CD4-positive, alpha-beta memory T cell (primary cell): ENCODE measurements at regions of chr1 and their contacts with region 1.

Region 1: GRCh38 chr1:111214074-111214801 is 13.3 kb upstream of the CHI3L2 start:
- DNase-seq: no peak
- H3K4me3 ChIP-seq: peak overlapping the region in 1 of 2 donors; percentile 25
- H3K4me3 Mint-ChIP-seq: peak overlapping the region; percentile 64 to 87 (median 76)
- H3K27ac ChIP-seq: peak overlapping the region; percentile 48
- H3K27ac Mint-ChIP-seq: peak overlapping the region; percentile 87 to 100 (median 97)
- H3K4me1 ChIP-seq: peaks cover 76% of the 10 kb centered on the region
- H3K4me1 Mint-ChIP-seq: peaks cover 73 to 88% (median 76%) of the 10 kb centered on the region in 4 donors
- H3K27me3 ChIP-seq: no peaks in the 10 kb centered on the region
- H3K27me3 Mint-ChIP-seq: peaks cover 0 to 2% of the 10 kb centered on the region in 2 donors

Region 2: DNA sequence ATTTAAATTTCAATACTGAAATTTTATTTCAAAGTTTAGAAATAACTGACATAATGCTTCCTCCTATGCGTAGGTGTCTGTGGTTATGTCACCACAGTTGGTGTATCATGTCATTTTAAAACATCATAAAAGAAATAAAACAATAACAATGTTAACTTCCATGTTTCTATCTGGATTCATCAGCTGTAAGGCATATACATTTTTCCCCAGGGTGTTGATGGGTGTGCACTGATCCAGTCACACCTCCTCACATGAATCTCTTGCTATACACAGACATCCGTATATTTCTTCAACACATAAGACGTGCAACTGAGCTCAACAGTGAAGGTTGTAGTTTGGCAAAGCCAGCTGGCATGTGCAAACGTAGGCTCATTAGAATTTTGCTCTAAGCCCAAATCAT is 545.7 kb before region 1 on chr1:
- CTCF ChIA-PET with region 1: no interaction called
- POLR2A ChIA-PET with region 1: no interaction called
- intact Hi-C with region 1: no loop called
- DNase-seq: peak; percentile 36 to 54 (median 49)
- H3K4me3 ChIP-seq: peak overlapping the region; percentile 52 to 68
- H3K4me3 Mint-ChIP-seq: peak overlapping the region; percentile 68 to 89 (median 84)
- H3K27ac ChIP-seq: peak overlapping the region; percentile 91
- H3K27ac Mint-ChIP-seq: peak overlapping the region in 6 of 7 donors; percentile 77 to 94 (median 89)
- H3K4me1 ChIP-seq: peaks cover 76% of the 10 kb centered on the region
- H3K4me1 Mint-ChIP-seq: peaks cover 19 to 40% (median 23%) of the 10 kb centered on the region in 4 donors
- H3K27me3 ChIP-seq: no peaks in the 10 kb centered on the region
- H3K27me3 Mint-ChIP-seq: no peaks in the 10 kb centered on the region

Region 3: GRCh38 chr1:111139956-111140679 is 74.1 kb before region 1 on chr1 and contains the starts of genes CEPT1 and DRAM2:
- CTCF ChIA-PET with region 1: no interaction called
- POLR2A ChIA-PET with region 1: interaction called, 15 read pairs
- intact Hi-C with region 1: loop called (anchors 2 kb)
- DNase-seq: peak; percentile 89 to 95 (median 91)
- H3K4me3 ChIP-seq: peak within 1 kb of the TSS; percentile 57 to 97
- H3K4me3 Mint-ChIP-seq: peak within 1 kb of the TSS; percentile 98 to 100 (median 100)
- H3K27ac ChIP-seq: peak within 1 kb of the TSS; percentile 79
- H3K27ac Mint-ChIP-seq: peak within 1 kb of the TSS; percentile 84 to 100 (median 99)
- H3K4me1 ChIP-seq: peaks cover 54% of the 10 kb centered on the region
- H3K4me1 Mint-ChIP-seq: peaks cover 32 to 54% (median 41%) of the 10 kb centered on the region in 4 donors
- H3K27me3 ChIP-seq: no peaks in the 10 kb centered on the region
- H3K27me3 Mint-ChIP-seq: no peaks in the 10 kb centered on the region
- total RNA-seq, gene CEPT1: 49.1 to 49.6 TPM
- total RNA-seq, gene DRAM2: 37.5 to 38.8 TPM

Region 4: DNA sequence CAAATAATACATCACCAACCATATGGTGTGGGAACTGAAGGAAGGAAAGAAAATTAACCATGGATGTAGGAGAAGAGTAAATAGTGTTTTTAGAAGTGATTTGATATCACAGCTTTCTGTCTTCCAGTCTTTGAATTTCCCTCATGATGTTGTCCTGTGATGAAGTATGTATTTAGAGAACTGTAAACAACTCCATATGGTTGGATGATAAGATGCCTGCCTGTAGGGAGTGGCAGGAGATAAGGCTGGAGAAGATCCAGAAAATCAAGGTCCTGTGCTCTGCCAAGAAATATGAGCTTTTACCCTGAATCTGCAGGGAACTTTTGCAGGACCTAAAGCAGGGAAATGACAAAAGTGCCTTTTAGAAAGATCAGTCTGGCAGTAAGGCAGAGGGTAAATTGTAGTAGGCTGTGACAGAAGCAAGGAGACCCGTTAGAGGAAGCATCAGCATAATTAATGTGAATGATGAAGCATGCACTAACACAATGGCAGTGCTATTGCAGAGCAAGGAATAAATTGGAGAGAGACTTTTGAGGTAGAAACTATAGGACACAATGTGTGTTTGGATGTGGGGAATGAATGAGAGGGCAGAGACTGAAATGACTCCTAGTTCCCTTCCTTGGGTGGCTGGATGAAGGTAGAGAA is 52.3 kb before region 1 on chr1:
- CTCF ChIA-PET with region 1: no interaction called
- POLR2A ChIA-PET with region 1: no interaction called
- intact Hi-C with region 1: no loop called
- DNase-seq: no peak
- H3K4me3 ChIP-seq: no peak overlapping the region
- H3K4me3 Mint-ChIP-seq: no peak overlapping the region
- H3K27ac ChIP-seq: no peak overlapping the region
- H3K27ac Mint-ChIP-seq: peak overlapping the region in 2 of 7 donors; percentile 23 to 43
- H3K4me1 ChIP-seq: no peaks in the 10 kb centered on the region
- H3K4me1 Mint-ChIP-seq: peaks cover 10 to 20% (median 15%) of the 10 kb centered on the region in 4 donors
- H3K27me3 ChIP-seq: no peaks in the 10 kb centered on the region
- H3K27me3 Mint-ChIP-seq: no peaks in the 10 kb centered on the region

Region 5: DNA sequence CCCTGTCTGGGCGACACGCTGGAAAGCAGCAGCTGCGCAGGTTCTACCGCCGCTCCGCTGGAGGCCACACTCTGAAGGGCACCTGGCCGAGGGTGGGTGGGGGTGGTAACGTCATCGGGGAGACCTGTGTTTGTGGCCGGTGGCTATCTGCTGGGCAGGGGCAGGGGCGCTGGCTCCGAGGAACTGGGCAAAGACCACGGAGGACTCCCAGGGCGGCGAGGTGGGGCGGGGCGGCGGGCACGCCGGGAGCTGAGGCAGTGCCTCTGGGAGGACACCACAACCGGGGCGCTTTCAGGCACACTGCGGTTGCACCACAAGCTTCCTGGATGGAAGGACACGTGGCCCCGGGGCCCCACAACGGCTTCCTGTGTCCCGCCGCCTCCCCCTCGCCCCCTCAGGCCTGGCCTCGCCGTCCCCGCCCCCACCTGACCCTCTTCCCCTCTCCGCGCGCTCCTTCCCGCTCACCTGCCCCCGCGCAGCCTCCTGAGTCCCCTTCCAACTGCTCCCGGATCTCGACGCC is 10.5 kb before region 1 on chr1:
- CTCF ChIA-PET with region 1: interaction called, 623 read pairs
- POLR2A ChIA-PET with region 1: interaction called, 1,434 read pairs
- intact Hi-C with region 1: loop called (anchors 1 kb)
- DNase-seq: peak; percentile 83 to 91 (median 86)
- H3K4me3 ChIP-seq: peak overlapping the region; percentile 18 to 65
- H3K4me3 Mint-ChIP-seq: peak overlapping the region; percentile 99 to 100 (median 100)
- H3K27ac ChIP-seq: peak overlapping the region; percentile 84
- H3K27ac Mint-ChIP-seq: peak overlapping the region; percentile 94 to 98 (median 98)
- H3K4me1 ChIP-seq: peaks cover 45% of the 10 kb centered on the region
- H3K4me1 Mint-ChIP-seq: peaks cover 46 to 83% (median 57%) of the 10 kb centered on the region in 4 donors
- H3K27me3 ChIP-seq: no peaks in the 10 kb centered on the region
- H3K27me3 Mint-ChIP-seq: no peaks in the 10 kb centered on the region

Region 6: DNA sequence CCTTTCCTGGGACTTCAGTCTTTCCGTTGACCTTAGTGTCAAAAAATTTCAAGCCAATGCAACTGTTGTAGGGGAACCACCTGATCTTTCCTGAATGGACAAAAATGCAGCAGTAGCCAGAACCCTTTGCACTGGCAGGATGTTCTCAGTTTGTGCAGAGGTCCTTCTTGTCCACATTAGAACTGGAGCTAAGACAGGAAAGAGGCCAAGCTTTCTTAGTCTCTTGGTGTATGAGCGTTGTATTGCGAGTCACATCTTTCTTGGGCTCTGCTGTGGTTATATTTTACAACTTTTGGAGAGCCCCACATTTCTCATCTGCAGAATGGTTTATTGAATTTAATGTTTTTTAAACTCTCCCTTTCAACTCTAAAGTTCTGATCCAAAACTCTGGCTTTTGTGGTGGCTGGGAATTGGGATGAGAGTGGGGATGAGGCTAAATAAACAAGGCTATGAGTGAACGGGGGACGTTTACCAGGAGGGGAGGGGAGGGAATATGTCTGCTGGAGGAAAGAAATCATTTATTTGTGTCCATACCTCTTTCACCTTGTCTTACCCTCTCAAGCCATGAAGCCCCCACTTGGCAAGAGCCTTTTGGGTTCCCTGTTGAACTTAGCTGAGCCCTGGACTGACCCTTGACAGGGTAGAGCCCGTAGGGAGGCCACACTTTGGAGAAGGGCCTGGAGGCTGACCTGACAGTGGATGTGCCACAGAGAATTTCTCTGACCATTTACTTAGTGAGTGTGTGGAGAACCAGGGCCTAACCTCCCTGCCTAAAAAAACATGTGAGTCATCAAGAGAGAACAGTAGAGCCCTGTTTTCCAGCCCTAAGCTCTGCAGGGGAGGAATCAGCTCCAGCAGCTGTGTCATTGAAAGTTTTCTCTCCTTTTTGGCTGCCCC is 13.9 kb after region 1 on chr1:
- CTCF ChIA-PET with region 1: interaction called, 16 read pairs
- POLR2A ChIA-PET with region 1: interaction called, 105 read pairs
- intact Hi-C with region 1: no loop called
- DNase-seq: no peak
- H3K4me3 ChIP-seq: no peak overlapping the region
- H3K4me3 Mint-ChIP-seq: peak overlapping the region in 7 of 8 donors; percentile 22 to 78 (median 54)
- H3K27ac ChIP-seq: no peak overlapping the region
- H3K27ac Mint-ChIP-seq: peak overlapping the region; percentile 57 to 93 (median 88)
- H3K4me1 ChIP-seq: peaks cover 74% of the 10 kb centered on the region
- H3K4me1 Mint-ChIP-seq: peaks cover 51 to 81% (median 66%) of the 10 kb centered on the region in 4 donors
- H3K27me3 ChIP-seq: no peaks in the 10 kb centered on the region
- H3K27me3 Mint-ChIP-seq: no peaks in the 10 kb centered on the region